Panc1 (cell line): ENCODE measurements at regions of chr18 and their contacts with region 1.

Region 1: GRCh38 chr18:12883684-12884405 is at the start of gene PTPN2:
- DNase-seq: peak; percentile 62
- ATAC-seq: peak; percentile 95
- H3K4me3 ChIP-seq: peak within 1 kb of the TSS; percentile 84 to 93
- H3K27ac ChIP-seq: peak within 1 kb of the TSS; percentile 95
- H3K4me1 ChIP-seq: peaks cover 37% of the 10 kb centered on the region
- H3K27me3 ChIP-seq: no peaks in the 10 kb centered on the region
- CTCF ChIP-seq: no peak
- total RNA-seq, gene PTPN2: 34.8 TPM

Region 2: GRCh38 chr18:12851716-12852115 is 32.1 kb before region 1 on chr18:
- CTCF ChIA-PET with region 1: no interaction called
- POLR2A ChIA-PET with region 1: interaction called, 10 read pairs
- in situ Hi-C with region 1: no loop called
- intact Hi-C with region 1: no loop called
- DNase-seq: no peak
- ATAC-seq: no peak
- H3K4me3 ChIP-seq: no peak overlapping the region
- H3K27ac ChIP-seq: no peak overlapping the region
- H3K4me1 ChIP-seq: no peaks in the 10 kb centered on the region
- H3K27me3 ChIP-seq: no peaks in the 10 kb centered on the region
- CTCF ChIP-seq: no peak

Region 3: DNA sequence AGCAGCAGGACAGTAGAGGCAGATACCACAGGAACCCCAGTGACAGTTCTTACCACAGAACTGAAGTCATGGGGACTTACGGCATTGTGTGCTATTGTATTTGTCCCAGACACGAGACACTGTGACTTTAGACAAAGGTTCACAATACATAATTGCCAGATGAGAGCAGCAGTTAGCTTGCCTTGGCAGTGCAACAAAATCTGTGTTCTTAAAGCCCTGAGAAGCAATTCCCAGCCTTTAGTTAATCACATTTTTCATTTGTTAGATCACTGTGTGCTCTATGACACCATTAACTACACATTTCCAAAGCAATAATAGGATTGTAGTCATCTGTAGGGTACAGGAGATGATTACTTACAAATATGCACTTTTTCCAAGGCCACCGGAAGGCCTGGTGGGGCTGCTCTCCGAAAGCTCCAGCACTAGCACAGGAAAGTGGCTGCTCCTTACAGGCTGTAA is 237.2 kb after region 1 on chr18:
- CTCF ChIA-PET with region 1: no interaction called
- POLR2A ChIA-PET with region 1: no interaction called
- in situ Hi-C with region 1: no loop called
- intact Hi-C with region 1: no loop called
- DNase-seq: no peak
- ATAC-seq: no peak
- H3K4me3 ChIP-seq: no peak overlapping the region
- H3K27ac ChIP-seq: no peak overlapping the region
- H3K4me1 ChIP-seq: no peaks in the 10 kb centered on the region; the same call in 1 of the 2 replicates
- H3K27me3 ChIP-seq: no peaks in the 10 kb centered on the region
- CTCF ChIP-seq: no peak